Dorsolateral prefrontal cortex (tissue), 120 donors: ENCODE measurements at regions of chr6 and their contacts with region 1.

Region 1: GRCh38 chr6:74103417-74103816 is 407.4 kb downstream of the CD109 start:
- DNase-seq: no peak
- H3K4me3 ChIP-seq: no peak overlapping the region
- H3K27ac ChIP-seq: no peak overlapping the region
- H3K27me3 ChIP-seq: peaks cover 0 to 4% (median 0%) of the 10 kb centered on the region in 45 donors
- CTCF ChIP-seq: no peak

Region 2: GRCh38 chr6:73888050-73888449 is 215.4 kb before region 1 on chr6:
- intact Hi-C with region 1: no loop called
- DNase-seq: no peak
- H3K4me3 ChIP-seq: no peak overlapping the region
- H3K27ac ChIP-seq: no peak overlapping the region
- H3K27me3 ChIP-seq: no peaks in the 10 kb centered on the region
- CTCF ChIP-seq: no peak

Region 3: DNA sequence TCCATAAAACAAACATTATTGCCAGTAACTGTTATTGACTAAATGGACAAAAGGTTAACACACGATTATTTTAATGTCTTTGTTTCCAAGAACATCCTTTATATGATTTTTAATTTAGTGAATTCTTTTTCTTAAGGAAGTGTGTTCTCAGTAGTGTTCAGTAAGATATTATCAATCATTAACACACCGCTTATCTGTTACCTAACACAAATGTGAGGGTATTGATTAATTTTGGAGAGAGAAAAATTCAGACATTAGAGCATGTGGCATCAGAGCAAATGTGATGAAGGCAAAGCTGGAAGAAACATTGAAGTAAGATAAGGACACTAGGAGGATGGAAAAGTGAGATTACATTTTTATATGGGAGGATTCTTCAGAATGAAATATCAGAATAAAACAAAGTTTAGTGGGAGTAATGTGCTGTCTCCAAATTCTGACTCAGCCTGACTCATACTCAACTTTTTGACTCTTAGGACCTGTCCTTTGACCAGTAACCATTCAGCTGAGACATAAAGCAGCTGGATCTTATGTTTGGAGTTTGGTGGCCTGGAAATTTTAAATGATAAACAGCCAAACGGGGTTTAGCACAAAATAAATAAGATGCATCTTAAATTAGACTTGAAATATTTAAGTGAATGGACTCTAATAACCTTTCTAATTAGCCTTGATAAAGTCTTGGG is 58.9 kb before region 1 on chr6:
- intact Hi-C with region 1: no loop called
- DNase-seq: no peak
- H3K4me3 ChIP-seq: no peak overlapping the region
- H3K27ac ChIP-seq: no peak overlapping the region
- H3K27me3 ChIP-seq: no peaks in the 10 kb centered on the region
- CTCF ChIP-seq: no peak

Region 4: DNA sequence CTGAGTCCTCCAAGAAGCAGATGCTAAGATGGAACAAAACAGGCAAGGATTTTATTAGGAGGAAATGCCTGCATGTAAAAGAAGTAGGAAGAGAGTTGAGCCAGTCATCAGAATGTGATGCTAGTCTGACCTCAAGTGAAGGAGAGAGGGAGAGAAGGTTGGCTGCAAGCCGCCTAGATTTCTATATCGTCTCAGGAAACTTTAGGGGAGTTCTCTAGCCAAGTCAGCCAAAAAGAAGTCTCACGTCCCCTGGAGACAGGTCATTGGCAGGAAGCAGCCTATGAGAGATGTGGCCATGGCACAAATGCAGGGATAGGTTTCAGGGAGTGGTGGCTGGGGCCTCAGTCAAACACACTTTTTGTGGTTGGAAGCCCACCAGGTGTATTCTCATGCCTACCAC is 29.4 kb before region 1 on chr6:
- intact Hi-C with region 1: loop called in 1 of 2 experiments (anchors 1 kb)
- DNase-seq: no peak
- H3K4me3 ChIP-seq: no peak overlapping the region
- H3K27ac ChIP-seq: peak overlapping the region in 2 of 59 donors; percentile 6 to 17
- H3K27me3 ChIP-seq: peaks cover 0 to 9% (median 0%) of the 10 kb centered on the region in 45 donors
- CTCF ChIP-seq: no peak